Posterior vena cava (tissue), 2 donors: ENCODE measurements at regions of chr4 and their contacts with region 1.

Region 1: GRCh38 chr4:145843639-145844038 is 95.0 kb downstream of the ZNF827 start:
- DNase-seq: no peak

Region 2: DNA sequence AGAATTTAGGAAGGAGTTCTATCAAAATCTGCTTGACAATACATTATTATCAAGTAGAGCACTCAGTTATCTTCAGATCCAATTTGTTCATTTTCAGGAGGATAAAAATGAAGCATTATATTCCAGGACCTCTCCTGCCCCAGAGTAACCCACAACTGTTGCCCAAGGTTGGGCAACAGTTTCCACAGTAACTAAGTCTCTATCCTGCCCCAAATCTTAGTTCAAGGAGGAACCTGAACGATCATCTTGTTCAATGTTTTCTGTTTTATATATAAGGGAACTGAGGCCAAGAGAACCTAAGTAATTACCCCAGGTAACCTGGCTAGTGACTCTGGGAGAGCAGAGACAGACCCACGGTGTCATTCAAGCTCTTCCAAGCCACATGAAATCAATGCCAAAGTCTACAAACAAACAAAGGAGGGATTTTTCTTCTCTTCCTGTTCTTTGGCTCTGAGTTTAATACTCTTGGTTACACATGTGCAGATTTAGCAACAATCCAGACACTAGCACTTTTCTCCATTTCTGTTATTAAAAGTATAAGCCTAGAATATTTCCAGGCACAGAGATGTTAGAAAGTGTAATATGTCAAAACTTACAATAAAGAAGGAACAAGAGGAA is 58.1 kb before region 1 on chr4:
- intact Hi-C with region 1: no loop called
- DNase-seq: no peak

Region 3: DNA sequence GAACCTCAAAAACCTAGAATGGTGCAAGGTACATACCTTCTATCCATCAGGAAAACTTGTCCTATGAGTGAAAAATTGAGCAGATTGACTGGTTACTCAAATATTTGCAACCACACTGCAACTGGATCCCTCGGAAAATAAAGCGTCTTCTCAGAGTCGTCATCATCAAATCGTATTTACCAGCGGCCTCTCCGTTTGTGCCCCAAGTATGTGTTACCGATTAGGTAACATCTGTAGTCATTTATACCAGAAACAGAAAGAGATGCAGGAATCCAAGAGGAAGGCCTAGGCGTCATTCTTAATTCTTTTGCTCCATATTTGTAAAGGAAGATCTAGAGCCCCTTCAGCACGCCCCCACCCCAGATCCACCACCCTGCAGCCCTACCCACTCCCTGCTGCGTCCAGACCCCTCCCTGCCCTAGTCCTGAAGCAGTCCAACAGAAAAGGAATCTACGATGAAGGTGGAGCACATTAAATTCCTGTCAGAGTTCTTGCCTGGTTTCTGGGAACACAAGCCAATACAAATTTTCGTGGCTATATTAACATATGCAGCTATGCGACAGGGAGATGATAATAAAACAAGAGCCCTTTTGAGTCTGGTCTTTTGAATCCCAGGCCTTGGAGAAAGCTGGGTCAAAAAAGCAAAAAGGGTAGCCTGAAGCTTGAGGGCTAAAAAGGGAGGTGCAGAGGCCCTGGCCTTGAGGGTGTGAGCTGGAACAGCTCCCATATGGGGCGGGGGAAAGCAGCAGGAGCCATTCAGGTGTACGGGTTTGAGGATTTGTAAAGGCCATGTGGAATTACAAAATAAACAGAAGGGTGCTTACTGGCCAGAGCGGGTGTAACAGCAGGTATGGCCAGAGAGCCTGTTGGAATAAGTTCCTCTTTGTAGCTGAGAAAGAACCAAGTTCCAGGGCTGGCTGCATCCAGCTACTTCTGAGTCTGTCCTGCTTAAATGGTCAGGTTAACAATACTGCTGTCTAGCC is 18.0 kb after region 1 on chr4:
- intact Hi-C with region 1: loop called in 1 of 2 experiments (anchors 2 kb)
- DNase-seq: no peak

Region 4: GRCh38 chr4:147207911-147208310 is 1364.3 kb after region 1 on chr4:
- intact Hi-C with region 1: no loop called
- DNase-seq: no peak